ENCODE measurements at regions of chr5 and their contacts with region 1.

Region 1: GRCh38 chr5:1122511-1123294 is 10.8 kb upstream of the SLC12A7 start:
- DNase-seq: peak; percentile 85

Region 2: GRCh38 chr5:1105350-1106265 is 17.1 kb before region 1 on chr5:
- intact Hi-C with region 1: loop called (anchors 2 kb)
- DNase-seq: no peak